Endothelial cell of umbilical vein (primary cell): ENCODE measurements at regions of chr7 and their contacts with region 1.

Region 1: DNA sequence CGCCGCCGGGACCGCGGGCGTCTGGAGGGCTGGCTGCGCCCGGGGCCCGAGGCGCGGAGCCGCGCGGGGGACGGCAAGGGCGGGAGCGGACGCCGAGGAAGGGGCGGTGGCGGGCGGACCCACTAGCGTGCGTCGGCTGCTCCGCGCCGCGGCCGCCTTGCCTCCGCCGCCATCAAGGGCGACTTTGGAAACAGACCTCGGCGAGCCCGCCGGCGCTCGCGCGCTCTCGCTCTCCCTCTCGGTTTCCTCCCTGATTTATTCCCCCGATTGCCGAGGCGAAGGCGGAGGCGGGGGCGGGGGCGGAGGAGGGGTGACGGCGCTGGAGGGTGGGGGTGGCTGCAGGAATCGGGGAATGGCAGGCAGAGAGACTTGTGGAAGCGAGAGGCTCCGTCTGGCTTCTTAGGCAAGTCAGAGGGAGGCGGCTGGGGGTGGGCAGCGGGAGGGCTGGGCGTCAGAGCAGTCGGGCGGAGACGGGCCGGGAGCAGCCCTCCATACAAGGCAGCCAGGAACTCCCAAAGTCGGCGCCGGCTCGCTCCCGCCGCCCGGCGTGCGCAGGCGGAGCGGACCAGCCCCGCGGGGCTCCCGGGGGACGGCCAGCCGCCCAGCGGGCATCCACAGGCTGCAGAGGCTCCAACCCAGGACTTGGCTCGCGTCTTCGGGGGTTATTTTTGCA is at the start of gene CACNA2D1:
- DNase-seq: peak; percentile 88
- H3K4me3 ChIP-seq: peak within 1 kb of the TSS; percentile 59 to 91 (median 79)
- H3K27ac ChIP-seq: peak within 1 kb of the TSS; percentile 80
- H3K4me1 ChIP-seq: peaks cover 19% of the 10 kb centered on the region
- H3K27me3 ChIP-seq: no peaks in the 10 kb centered on the region
- CTCF ChIP-seq: peak in 1 of 2 donors; percentile 26
- POLR2A ChIP-seq: peak; percentile 88
- total RNA-seq, gene CACNA2D1: 38.6 and 42.1 TPM in 2 replicates

Region 2: DNA sequence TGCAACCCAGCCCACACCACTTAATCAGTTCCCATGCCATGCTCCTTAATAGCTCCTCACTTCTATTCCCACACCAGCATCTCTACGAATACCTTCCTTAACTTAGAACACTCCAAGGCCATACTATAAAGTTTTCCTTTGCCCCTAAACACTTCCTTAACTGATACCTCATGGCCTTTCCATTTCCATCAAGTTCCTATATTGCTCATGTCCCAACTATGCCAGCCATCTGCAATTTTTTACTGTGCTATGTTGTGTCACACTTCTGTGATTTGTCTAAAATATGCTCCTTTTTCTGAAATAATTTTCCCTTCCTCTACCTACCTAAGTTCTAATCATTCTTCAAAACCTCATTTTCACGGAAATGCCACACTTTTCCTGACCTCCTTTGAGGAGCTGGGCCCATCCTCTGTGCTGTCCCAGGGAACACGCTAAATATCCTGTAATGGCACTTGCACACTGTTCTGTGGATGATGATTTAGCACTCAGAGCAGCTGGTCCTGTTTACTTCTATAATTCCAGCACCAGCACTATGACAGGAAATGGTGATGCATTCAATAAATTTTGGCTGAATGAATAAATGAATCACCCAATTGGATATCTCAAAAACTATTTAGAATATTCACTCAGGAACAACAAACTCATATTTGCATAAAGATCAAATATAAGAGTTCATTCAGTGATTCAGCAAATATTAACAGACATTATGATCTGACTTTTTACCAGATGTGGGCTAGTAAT is 407.4 kb before region 1 on chr7:
- CTCF ChIA-PET with region 1: no interaction called
- POLR2A ChIA-PET with region 1: no interaction called
- dilution Hi-C with region 1: no loop called
- intact Hi-C with region 1: loop called (anchors 2 kb)
- DNase-seq: peak; percentile 90
- H3K4me3 ChIP-seq: peak overlapping the region in 1 of 3 experiments; percentile 28
- H3K27ac ChIP-seq: peak overlapping the region; percentile 90
- H3K4me1 ChIP-seq: peaks cover 58% of the 10 kb centered on the region
- H3K27me3 ChIP-seq: no peaks in the 10 kb centered on the region
- CTCF ChIP-seq: no peak
- POLR2A ChIP-seq: peak; percentile 12

Region 3: DNA sequence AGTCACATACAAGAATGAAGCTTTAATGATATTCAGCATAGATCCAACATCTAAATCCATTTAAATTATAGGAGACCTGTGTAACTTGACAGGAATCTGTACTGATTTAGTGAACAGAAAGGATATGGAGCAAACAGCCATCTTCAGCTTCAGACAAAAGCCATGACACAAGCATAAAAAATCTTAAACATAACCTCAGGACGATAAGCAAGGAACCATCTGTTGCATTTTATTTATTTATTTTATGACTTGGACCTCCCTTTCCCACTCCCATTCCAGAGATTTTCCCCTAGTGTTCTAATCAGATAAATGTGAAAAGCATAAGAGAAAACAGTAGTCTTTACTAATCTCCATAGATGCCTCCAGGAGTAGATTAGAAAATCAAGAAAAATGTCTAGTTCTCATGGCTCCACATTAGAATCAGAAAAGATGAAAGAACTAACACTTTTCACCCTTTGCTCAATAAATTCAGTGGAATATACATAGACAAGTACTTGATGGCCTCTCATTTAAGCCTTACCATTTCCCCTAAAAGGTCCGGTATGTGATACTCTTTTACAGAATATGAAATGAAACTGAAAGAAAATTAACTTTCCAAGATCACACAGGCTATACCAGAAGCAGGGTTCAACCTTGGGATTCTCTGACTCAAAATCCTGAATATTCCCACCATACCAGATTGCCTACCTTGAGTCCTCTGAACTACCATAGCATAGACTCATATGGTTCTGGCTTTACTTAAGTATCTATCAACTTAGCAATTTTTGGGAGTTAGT is 15.3 kb before region 1 on chr7:
- CTCF ChIA-PET with region 1: no interaction called
- POLR2A ChIA-PET with region 1: no interaction called
- dilution Hi-C with region 1: no loop called
- intact Hi-C with region 1: loop called (anchors 1 kb)
- DNase-seq: peak; percentile 73
- H3K4me3 ChIP-seq: no peak overlapping the region
- H3K27ac ChIP-seq: peak overlapping the region; percentile 35
- H3K4me1 ChIP-seq: peaks cover 7% of the 10 kb centered on the region
- H3K27me3 ChIP-seq: no peaks in the 10 kb centered on the region
- CTCF ChIP-seq: no peak
- POLR2A ChIP-seq: no peak